Esophagus squamous epithelium (tissue), 5 donors: ENCODE measurements at regions of chr4 and their contacts with region 1.

Region 1: GRCh38 chr4:112321776-112322684 is 24.9 kb downstream of the ALPK1 start:
- DNase-seq: peak; percentile 3
- H3K4me3 ChIP-seq: no peak overlapping the region
- H3K27ac ChIP-seq: no peak overlapping the region
- H3K4me1 ChIP-seq: peaks cover 0 to 6% (median 3%) of the 10 kb centered on the region in 3 donors
- H3K27me3 ChIP-seq: no peaks in the 10 kb centered on the region
- CTCF ChIP-seq: peak; percentile 53 to 86 (median 78)
- POLR2A ChIP-seq: no peak

Region 2: DNA sequence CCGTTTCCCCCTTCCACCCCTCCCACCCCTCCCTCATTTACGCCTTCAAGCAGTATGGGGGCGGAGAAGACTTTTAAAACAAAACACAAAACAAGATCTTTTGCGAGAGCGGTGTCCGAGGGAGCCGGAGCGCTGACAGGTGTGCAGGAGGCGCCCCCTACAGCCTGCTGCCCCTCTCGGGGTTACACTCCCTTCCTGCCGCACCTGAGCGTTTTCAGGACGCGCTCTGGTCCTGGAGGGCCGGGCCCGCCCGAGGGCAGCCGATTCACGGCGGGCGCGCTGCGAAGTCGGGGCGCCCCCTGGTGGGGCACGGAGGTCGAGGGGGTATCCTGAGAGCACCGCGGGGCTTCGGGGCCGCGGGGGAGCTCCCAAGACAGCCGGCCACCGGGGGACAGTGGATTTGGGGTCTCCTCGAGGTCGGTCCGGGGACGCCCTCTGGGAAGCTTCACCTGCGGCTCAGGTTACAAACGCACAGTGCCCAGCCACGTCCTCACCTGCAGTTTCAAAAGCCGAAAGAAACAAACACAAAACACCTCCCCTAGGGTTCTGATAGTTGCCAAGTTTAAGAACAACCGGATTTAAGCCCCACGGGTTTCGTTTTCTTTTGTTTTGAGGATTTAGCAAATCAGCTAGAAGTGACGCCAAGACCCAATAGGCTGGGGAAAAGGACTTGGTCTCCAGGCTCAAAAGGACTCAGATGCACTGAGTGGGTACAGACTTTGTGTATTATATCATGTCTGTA is 201.9 kb after region 1 on chr4:
- intact Hi-C with region 1: loop called (anchors 5 kb)
- DNase-seq: no peak
- H3K4me3 ChIP-seq: peak overlapping the region; percentile 11 to 62 (median 36)
- H3K27ac ChIP-seq: no peak overlapping the region
- H3K4me1 ChIP-seq: peaks cover 0 to 36% (median 24%) of the 10 kb centered on the region in 3 donors
- H3K27me3 ChIP-seq: peaks cover 20 to 97% (median 46%) of the 10 kb centered on the region in 4 donors
- CTCF ChIP-seq: peak; percentile 37 to 67 (median 62)
- POLR2A ChIP-seq: no peak